ENCODE measurements at regions of chr13 and their contacts with region 1.

Region 1: DNA sequence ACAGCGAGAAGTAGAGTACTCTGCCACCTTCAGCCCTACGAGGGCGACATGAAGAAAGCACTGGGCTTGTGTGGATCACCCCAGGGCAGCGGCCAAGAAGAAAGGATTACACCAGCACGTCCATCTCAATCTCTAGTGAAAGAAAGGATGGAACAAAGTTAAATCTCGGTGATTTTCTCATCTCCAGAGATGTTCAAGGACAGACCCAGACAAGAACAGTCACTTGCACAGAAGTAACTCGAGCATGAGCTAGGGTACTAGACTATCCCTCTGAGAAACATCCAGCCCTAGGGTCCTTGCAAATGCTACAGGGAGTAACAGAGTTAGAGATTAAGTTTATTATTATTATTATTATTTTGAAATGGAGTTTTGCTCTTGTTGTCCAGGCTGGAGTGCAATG is 106.7 kb downstream of the CRYL1 start:
- DNase-seq: no peak
- H3K4me3 Mint-ChIP-seq: no peak overlapping the region
- H3K27ac Mint-ChIP-seq: peak overlapping the region; percentile 42
- H3K4me1 Mint-ChIP-seq: peaks cover 57% of the 10 kb centered on the region
- H3K27me3 Mint-ChIP-seq: peaks cover 2% of the 10 kb centered on the region

Region 2: GRCh38 chr13:20049558-20050473 is 369.1 kb before region 1 on chr13:
- intact Hi-C with region 1: no loop called
- DNase-seq: no peak
- H3K4me3 Mint-ChIP-seq: peak overlapping the region; percentile 30
- H3K27ac Mint-ChIP-seq: no peak overlapping the region
- H3K4me1 Mint-ChIP-seq: peaks cover 22% of the 10 kb centered on the region
- H3K27me3 Mint-ChIP-seq: no peaks in the 10 kb centered on the region

Region 3: GRCh38 chr13:20359335-20359734 is 59.6 kb before region 1 on chr13:
- intact Hi-C with region 1: loop called (anchors 1 kb)
- DNase-seq: no peak
- H3K4me3 Mint-ChIP-seq: no peak overlapping the region
- H3K27ac Mint-ChIP-seq: no peak overlapping the region
- H3K4me1 Mint-ChIP-seq: peaks cover 14% of the 10 kb centered on the region
- H3K27me3 Mint-ChIP-seq: no peaks in the 10 kb centered on the region

Region 4: GRCh38 chr13:20461481-20461859 is 42.5 kb after region 1 on chr13:
- intact Hi-C with region 1: loop called (anchors 1 kb)
- DNase-seq: no peak
- H3K4me3 Mint-ChIP-seq: peak overlapping the region; percentile 53
- H3K27ac Mint-ChIP-seq: peak overlapping the region; percentile 87
- H3K4me1 Mint-ChIP-seq: peaks cover 42% of the 10 kb centered on the region
- H3K27me3 Mint-ChIP-seq: peaks cover 5% of the 10 kb centered on the region

Region 5: DNA sequence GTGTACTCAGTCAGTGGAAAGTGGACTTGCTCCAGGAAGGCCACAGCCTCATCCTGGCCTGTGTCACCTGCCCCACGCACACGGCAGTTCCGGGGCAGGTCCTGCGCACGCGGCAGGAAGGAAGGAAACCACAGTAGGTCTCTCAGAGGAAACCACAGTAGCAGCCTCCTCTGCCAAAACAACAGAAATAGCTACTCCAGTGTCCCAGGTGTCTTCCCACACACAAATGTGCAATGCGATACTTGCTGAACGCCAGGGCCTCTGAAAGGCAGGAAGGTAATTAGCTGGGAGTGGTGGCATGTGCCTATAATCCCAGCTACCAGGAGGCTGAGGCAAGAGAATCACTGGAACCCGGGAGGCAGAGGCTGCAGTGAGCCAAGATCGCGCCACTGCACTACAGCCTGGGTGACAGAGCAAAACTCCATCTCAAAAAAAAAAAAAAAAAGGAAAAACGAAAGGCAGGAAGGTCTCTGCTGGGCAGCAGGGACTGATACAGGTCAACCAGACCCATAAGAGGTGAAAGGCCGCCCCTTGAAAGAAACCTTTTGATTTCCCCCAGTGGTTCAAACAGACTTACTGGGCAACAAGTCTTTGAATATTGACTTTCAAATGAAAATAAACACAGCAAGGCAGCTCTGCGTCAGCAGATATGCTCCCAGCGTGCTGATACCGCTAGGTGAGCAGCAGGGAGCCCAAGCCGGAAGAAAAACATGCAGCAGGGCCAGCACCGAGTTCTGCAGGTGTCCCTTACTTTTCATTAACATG is 57.2 kb after region 1 on chr13:
- intact Hi-C with region 1: loop called (anchors 1 kb)
- DNase-seq: peak; percentile 64
- H3K4me3 Mint-ChIP-seq: peak overlapping the region; percentile 66
- H3K27ac Mint-ChIP-seq: peak overlapping the region; percentile 89
- H3K4me1 Mint-ChIP-seq: peaks cover 35% of the 10 kb centered on the region
- H3K27me3 Mint-ChIP-seq: peaks cover 16% of the 10 kb centered on the region

Measured in activated T-helper 1 cell treated with anti-CD3 and anti-CD28 coated beads, Interleukin-12 subunit alpha, Interleukin-12 subunit beta, Interleukin-2, Interleukin-4 antibody, amounts not matched to agents 30 ng/mL and 10 ng/mL and 1 ng/mL, durations not matched to agents 14 hours and 24 hours and 36 hours (primary cell).